Adrenal gland (tissue), 19 donors: ENCODE measurements at regions of chr7 and their contacts with region 1.

Region 1: GRCh38 chr7:44769776-44770662 is 21.4 kb downstream of the ZMIZ2 start:
- DNase-seq: peak in 3 of 7 donors; percentile 51 to 71 (median 53)
- H3K4me3 ChIP-seq: peak overlapping the region in 2 of 4 donors; percentile 9 to 22
- H3K27ac ChIP-seq: peak overlapping the region in 2 of 5 donors; percentile 44 to 54
- H3K4me1 ChIP-seq: peaks cover 12 to 30% of the 10 kb centered on the region in 2 donors
- H3K27me3 ChIP-seq: no peaks in the 10 kb centered on the region
- CTCF ChIP-seq: no peak
- POLR2A ChIP-seq: no peak

Region 2: GRCh38 chr7:44581879-44582603 is 188.0 kb before region 1 on chr7 and contains the start of gene TMED4:
- intact Hi-C with region 1: loop called in 1 of 2 experiments (anchors 10 kb)
- DNase-seq: peak; percentile 99 to 100 (median 100)
- H3K4me3 ChIP-seq: peak within 1 kb of the TSS; percentile 71 to 87 (median 79)
- H3K27ac ChIP-seq: peak within 1 kb of the TSS; percentile 78 to 99 (median 97)
- H3K4me1 ChIP-seq: peaks cover 8 to 26% of the 10 kb centered on the region in 2 donors
- H3K27me3 ChIP-seq: no peaks in the 10 kb centered on the region
- CTCF ChIP-seq: no peak
- POLR2A ChIP-seq: peak; percentile 72 to 97
- total RNA-seq, gene TMED4: 87.5 to 189 (median 127) TPM

Region 3: DNA sequence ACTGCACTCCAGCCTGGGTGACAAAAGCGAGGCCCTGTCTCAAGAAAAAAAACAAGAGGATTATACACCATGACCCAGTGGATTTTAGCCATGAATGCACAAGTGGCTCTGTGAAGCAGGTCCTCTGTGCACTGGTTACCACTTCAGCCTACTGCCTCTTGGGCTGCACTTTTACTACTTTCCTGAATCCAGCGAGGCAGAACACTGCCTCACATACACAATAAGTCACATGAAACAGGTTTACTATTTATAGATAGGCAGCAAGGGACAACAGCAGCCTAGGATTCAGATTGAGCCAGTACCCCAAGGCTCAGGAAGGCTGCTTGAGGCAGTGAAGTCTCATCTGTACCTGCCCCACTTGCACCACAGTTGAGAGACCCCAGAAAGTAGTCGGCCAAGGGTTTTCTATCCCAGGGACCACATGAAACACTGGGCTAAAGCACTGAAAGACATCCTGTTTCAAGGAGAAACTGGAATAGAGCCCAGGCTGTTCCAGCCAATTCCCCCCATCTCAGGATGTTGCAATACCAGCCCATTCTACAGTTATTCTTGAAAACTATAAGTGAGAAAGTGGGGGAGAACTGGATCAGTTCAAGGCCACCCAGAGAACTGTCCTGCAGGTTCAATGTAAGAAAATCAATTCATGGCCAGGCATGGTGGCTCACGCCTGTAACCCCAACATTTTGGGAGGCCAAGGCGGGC is 173.9 kb before region 1 on chr7:
- intact Hi-C with region 1: loop called in 1 of 2 experiments (anchors 10 kb)
- DNase-seq: no peak
- H3K4me3 ChIP-seq: no peak overlapping the region
- H3K27ac ChIP-seq: no peak overlapping the region
- H3K4me1 ChIP-seq: no peaks in the 10 kb centered on the region
- H3K27me3 ChIP-seq: no peaks in the 10 kb centered on the region
- CTCF ChIP-seq: no peak
- POLR2A ChIP-seq: no peak

Region 4: DNA sequence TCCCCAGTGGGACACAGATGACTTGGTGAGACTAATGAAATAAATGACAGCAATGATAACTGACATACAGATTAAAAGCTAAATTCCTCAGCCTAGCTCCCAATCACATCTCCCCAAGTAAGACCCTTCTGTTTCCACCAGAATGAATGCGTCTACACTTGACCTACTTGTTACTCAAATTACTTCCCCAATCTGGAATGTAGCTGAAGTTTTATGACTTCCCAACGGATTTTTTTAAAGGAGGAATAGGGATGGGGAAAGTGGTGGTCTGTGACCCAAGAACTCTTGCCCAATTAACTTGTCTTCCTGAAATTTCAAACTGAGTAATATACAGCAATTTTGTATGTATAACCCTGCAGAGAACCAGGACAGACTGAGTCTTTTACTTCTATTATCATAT is 68.7 kb after region 1 on chr7:
- intact Hi-C with region 1: loop called in 1 of 2 experiments (anchors 10 kb)
- DNase-seq: no peak
- H3K4me3 ChIP-seq: no peak overlapping the region
- H3K27ac ChIP-seq: no peak overlapping the region
- H3K4me1 ChIP-seq: peaks cover 4 to 28% of the 10 kb centered on the region in 2 donors
- H3K27me3 ChIP-seq: no peaks in the 10 kb centered on the region
- CTCF ChIP-seq: no peak
- POLR2A ChIP-seq: no peak